Panc1 (cell line): ENCODE measurements at regions of chr5 and their contacts with region 1.

Region 1: DNA sequence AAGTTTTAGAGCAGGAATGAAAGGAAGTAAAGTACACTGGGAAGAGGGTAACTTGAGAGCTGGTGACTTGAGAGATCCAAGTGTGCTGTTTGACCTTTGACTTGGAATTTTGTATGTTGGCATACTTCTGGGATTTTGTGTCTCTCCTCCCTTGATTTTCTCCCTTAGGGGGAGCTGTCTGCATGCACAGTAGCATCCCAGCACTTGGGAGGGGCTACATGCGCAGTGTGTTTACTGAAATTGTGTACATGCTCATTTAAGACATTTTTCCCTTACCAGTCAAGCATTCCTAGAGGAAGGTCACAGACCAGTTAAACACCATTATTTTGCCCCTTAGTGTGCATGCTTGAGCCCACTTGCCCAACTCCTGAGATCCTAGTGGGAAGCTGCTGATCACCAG is 120.1 kb downstream of the ZNF622 start:
- DNase-seq: no peak
- ATAC-seq: no peak
- H3K4me3 ChIP-seq: no peak overlapping the region
- H3K27ac ChIP-seq: no peak overlapping the region
- H3K4me1 ChIP-seq: no peaks in the 10 kb centered on the region
- H3K27me3 ChIP-seq: no peaks in the 10 kb centered on the region
- CTCF ChIP-seq: no peak

Region 2: DNA sequence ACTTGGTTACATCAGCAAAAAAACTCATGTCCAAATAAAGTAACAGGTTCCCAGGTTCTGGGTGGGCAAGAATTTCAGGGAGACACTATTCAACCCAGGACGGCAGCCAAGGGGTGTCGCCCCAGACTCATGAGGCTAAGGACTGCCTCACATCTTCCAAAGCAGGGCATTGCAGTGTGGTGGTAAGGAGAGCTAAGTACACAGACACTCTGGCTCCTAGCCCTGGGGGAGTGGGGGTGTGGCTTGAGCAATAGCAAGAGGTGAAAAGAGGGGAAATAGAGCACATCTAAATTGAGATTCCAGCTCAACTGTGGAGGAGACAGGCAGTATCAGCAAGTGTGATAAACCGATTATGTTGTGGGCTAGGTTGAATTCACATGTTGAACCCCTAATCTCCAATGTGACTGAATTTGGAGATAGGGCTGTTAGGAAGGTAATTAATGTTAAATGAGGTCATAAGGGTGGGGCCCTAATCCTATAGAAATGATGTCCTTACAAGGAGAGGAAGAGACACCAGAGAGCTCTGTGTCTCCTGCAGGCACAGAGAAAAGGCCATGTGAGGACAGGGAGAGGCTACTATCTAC is 116.0 kb before region 1 on chr5:
- CTCF ChIA-PET with region 1: no interaction called
- POLR2A ChIA-PET with region 1: no interaction called
- in situ Hi-C with region 1: no loop called
- intact Hi-C with region 1: no loop called
- DNase-seq: no peak
- ATAC-seq: no peak
- H3K4me3 ChIP-seq: no peak overlapping the region
- H3K27ac ChIP-seq: no peak overlapping the region
- H3K4me1 ChIP-seq: no peaks in the 10 kb centered on the region
- H3K27me3 ChIP-seq: no peaks in the 10 kb centered on the region
- CTCF ChIP-seq: no peak

Region 3: DNA sequence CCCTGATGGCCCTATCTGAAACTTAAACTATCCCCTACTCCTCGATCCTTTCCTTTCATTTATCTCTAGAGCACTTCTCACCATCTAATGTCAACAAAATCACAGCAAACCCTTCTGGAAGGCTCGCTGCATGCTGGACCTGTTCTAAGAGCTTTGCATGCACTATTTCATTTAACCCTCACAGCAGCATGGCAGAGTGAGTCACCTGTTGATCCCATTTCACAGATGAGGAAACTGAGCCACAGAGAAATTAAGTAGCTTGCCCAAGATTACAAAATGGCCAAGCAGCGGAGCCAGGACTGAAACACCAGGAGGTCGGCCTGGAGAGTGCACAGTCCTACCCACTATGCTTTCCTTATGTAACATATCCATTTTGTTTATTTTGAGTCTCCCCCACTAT is 27.0 kb after region 1 on chr5:
- CTCF ChIA-PET with region 1: no interaction called
- POLR2A ChIA-PET with region 1: interaction called, 14 read pairs
- in situ Hi-C with region 1: no loop called
- intact Hi-C with region 1: no loop called
- DNase-seq: no peak
- ATAC-seq: no peak
- H3K4me3 ChIP-seq: no peak overlapping the region
- H3K27ac ChIP-seq: no peak overlapping the region
- H3K4me1 ChIP-seq: no peaks in the 10 kb centered on the region
- H3K27me3 ChIP-seq: peaks cover 1% of the 10 kb centered on the region; the same call in 1 of the 2 replicates
- CTCF ChIP-seq: no peak